ENCODE measurements at regions of chr10 and their contacts with region 1.

Region 1: DNA sequence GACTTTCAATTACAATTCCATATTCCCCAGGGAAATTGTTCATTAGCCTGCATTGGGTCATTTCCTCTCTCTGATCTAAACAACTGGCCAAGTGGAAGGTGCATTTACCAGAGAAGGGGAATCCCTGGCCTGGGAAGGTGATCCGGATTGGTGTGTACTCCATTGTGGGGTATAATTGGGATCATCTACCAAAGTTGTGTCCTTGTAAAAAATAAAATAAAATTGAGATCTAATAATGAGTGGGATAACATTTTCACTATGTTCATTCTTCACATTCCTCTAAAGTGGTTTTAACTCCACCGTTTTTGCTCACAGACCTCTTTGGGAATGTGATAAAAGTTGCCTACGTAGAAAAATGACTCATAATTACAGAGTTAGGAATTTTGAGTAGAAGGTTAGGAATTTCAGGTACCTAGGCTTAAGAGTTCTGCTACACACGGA is 22.8 kb downstream of the ARL5B start:
- DNase-seq: peak; percentile 65
- ATAC-seq: peak; percentile 42
- H3K4me3 ChIP-seq: no peak overlapping the region
- H3K27ac ChIP-seq: peak overlapping the region; percentile 21; the same call in 1 of the 2 replicates
- H3K4me1 ChIP-seq: peaks cover 14% of the 10 kb centered on the region
- H3K27me3 ChIP-seq: no peaks in the 10 kb centered on the region
- CTCF ChIP-seq: no peak
- POLR2A ChIP-seq: peak; percentile 26; the same call in 1 of the 2 replicates
- RAD21 ChIP-seq: no peak

Region 2: DNA sequence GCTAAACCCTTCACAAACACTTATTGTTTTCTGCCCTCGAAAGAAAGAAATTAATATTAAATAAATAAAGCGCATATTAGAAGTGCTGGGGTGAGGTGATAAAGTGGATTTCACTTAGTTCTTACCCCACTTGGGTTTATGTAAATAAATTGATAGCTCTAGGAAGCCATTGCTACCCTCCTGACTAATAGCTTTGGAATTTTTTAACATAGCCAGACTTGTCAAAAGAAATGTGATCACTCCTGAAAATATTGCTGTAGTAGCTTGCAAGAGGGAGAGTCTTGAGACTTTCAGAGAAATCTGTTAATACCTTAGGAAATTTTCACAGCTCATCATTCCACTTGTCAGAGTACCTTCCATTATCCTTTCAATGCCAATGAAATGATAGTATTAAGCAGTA is 15.2 kb before region 1 on chr10:
- CTCF ChIA-PET with region 1: no interaction called
- POLR2A ChIA-PET with region 1: no interaction called
- dilution Hi-C with region 1: no loop called
- in situ Hi-C with region 1: no loop called
- intact Hi-C with region 1: loop called (anchors 2 kb)
- DNase-seq: peak; percentile 86
- ATAC-seq: peak; percentile 81
- H3K4me3 ChIP-seq: no peak overlapping the region
- H3K27ac ChIP-seq: no peak overlapping the region
- H3K4me1 ChIP-seq: peaks cover 10% of the 10 kb centered on the region
- H3K27me3 ChIP-seq: no peaks in the 10 kb centered on the region
- CTCF ChIP-seq: no peak
- POLR2A ChIP-seq: no peak
- RAD21 ChIP-seq: no peak

Measured in IMR-90 (cell line).